ENCODE measurements at regions of chr11 and their contacts with region 1.

Region 1: DNA sequence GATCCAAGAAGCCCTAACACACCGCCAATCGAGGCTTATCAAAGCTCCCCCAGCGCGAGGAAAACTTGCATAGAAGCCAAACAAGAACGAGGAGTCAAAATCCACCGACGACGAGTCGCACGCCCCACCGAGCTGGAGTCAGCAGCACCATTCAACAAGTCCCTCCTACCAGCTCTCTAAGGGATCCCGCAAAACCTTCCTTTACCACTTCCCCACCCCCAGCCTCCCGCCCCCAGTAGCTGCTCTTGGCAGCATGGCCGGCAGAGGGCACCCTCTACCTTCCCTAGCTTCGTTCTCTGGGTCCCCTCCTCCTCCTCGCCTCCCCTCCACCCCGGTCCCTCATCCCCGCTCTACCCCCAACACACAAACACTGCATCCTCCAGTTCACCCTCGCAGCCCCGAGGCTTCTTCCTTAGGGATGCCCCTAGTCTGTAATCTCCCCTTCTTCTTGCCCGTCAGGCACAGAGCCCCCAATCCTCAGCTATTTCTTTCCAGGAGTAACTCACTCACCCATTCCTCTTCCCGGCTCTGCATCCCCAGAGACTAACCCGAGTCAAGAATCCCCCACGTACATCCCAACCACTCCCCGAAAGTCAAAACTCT is 1.3 kb downstream of the BDNF start:
- DNase-seq: peak; percentile 55
- H3K4me3 ChIP-seq: peak overlapping the region; percentile 49 to 66 (median 58)
- H3K27ac ChIP-seq: no peak overlapping the region
- H3K4me1 ChIP-seq: peaks cover 23% of the 10 kb centered on the region
- H3K27me3 ChIP-seq: peaks cover 7% of the 10 kb centered on the region
- CTCF ChIP-seq: peak; percentile 34 to 85

Region 2: GRCh38 chr11:27642954-27643353 is 56.0 kb before region 1 on chr11:
- CTCF ChIA-PET with region 1: interaction called, 5 read pairs
- dilution Hi-C with region 1: no loop called
- in situ Hi-C with region 1: no loop called
- intact Hi-C with region 1: loop called (anchors 5 kb)
- DNase-seq: no peak
- H3K4me3 ChIP-seq: no peak overlapping the region
- H3K27ac ChIP-seq: no peak overlapping the region
- H3K4me1 ChIP-seq: peaks cover 7% of the 10 kb centered on the region
- H3K27me3 ChIP-seq: no peaks in the 10 kb centered on the region
- CTCF ChIP-seq: peak in 1 of 2 donors; percentile 35

Region 3: GRCh38 chr11:28107748-28108618 is 409.0 kb after region 1 on chr11 and contains the starts of genes KIF18A and METTL15:
- CTCF ChIA-PET with region 1: interaction called, 3 read pairs
- dilution Hi-C with region 1: no loop called
- in situ Hi-C with region 1: no loop called
- intact Hi-C with region 1: loop called (anchors 5 kb)
- DNase-seq: peak; percentile 99
- H3K4me3 ChIP-seq: peak within 1 kb of the TSS; percentile 77 to 93 (median 85)
- H3K27ac ChIP-seq: peak within 1 kb of the TSS; percentile 98
- H3K4me1 ChIP-seq: peaks cover 16% of the 10 kb centered on the region
- H3K27me3 ChIP-seq: no peaks in the 10 kb centered on the region
- CTCF ChIP-seq: no peak
- total RNA-seq, gene KIF18A: 1.0 to 11.6 TPM
- total RNA-seq, gene METTL15: 17.2 to 17.9 TPM

Region 4: DNA sequence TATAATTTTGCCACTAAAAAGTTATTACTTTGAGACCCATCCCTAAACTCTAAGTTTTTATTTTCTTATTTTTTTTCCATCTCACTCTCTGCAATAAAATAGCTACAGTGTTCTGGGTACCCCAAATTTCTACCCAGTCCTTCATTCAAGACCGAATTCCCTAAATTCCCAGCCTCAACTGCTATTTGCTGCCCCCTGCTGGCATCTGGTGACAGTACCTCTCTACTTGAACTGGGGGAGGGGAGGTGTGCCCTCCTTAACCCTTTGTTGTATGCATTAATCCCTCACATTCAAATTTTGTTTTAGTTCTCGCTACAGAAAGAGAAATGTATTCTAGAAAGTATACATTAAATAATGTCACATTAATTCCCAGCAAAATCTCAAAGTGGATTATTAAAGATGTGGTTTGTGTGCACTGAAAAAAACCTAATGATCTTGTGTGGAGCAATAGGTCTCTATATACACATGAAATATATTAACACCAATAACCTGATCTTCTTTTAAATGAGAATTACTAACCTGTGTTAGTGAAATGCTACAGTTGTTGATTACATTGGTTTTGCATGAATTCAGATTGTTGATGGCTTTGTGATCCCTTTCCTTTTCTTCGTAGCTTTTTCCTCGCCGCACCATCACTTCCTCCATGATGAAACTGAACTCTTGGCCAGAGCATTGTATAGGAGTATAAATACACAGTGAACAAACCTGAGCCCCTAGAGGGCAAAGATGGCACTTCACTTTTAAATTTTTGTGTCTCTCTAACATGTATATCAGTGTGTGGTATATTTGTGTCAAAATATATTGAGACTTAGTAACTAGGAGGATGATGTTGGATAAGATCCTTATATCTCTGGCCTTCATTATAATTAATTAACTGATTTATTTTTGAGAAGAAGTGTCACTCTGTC is 999.2 kb after region 1 on chr11:
- CTCF ChIA-PET with region 1: interaction called, 4 read pairs
- dilution Hi-C with region 1: no loop called
- in situ Hi-C with region 1: no loop called
- intact Hi-C with region 1: loop called (anchors 1 kb)
- DNase-seq: peak; percentile 20
- H3K4me3 ChIP-seq: no peak overlapping the region
- H3K27ac ChIP-seq: no peak overlapping the region
- H3K4me1 ChIP-seq: peaks cover 20% of the 10 kb centered on the region
- H3K27me3 ChIP-seq: no peaks in the 10 kb centered on the region
- CTCF ChIP-seq: peak; percentile 78 to 93

Region 5: GRCh38 chr11:29272019-29272654 is 1573.2 kb after region 1 on chr11:
- CTCF ChIA-PET with region 1: interaction called, 4 read pairs
- dilution Hi-C with region 1: no loop called
- in situ Hi-C with region 1: no loop called
- intact Hi-C with region 1: loop called (anchors 5 kb)
- DNase-seq: peak; percentile 51
- H3K4me3 ChIP-seq: no peak overlapping the region
- H3K27ac ChIP-seq: no peak overlapping the region
- H3K4me1 ChIP-seq: peaks cover 8% of the 10 kb centered on the region
- H3K27me3 ChIP-seq: no peaks in the 10 kb centered on the region
- CTCF ChIP-seq: peak; percentile 56 to 72

Measured in mammary epithelial cell (primary cell).